ENCODE measurements at regions of chr5 and their contacts with region 1.

Region 1: GRCh38 chr5:90434116-90434714 is 24.7 kb upstream of the CETN3 start:
- DNase-seq: no peak
- H3K4me3 ChIP-seq: no peak overlapping the region
- H3K27ac ChIP-seq: no peak overlapping the region
- H3K4me1 ChIP-seq: no peaks in the 10 kb centered on the region
- H3K27me3 ChIP-seq: no peaks in the 10 kb centered on the region
- CTCF ChIP-seq: peak in 4 of 6 experiments; percentile 21 to 49 (median 36)
- POLR2A ChIP-seq: no peak

Region 2: GRCh38 chr5:90529939-90530677 is 95.9 kb after region 1 on chr5:
- intact Hi-C with region 1: loop called (anchors 10 kb)
- DNase-seq: peak; percentile 50
- H3K4me3 ChIP-seq: peak overlapping the region; percentile 73 to 94 (median 81)
- H3K27ac ChIP-seq: peak overlapping the region; percentile 92 to 97 (median 94)
- H3K4me1 ChIP-seq: peaks cover 0 to 38% (median 20%) of the 10 kb centered on the region in 3 donors
- H3K27me3 ChIP-seq: peaks cover 0 to 30% (median 0%) of the 10 kb centered on the region in 4 donors
- CTCF ChIP-seq: peak in 5 of 6 experiments; percentile 52 to 75 (median 64)
- POLR2A ChIP-seq: no peak

Region 3: GRCh38 chr5:90700299-90700698 is 266.1 kb after region 1 on chr5:
- intact Hi-C with region 1: no loop called
- DNase-seq: no peak
- H3K4me3 ChIP-seq: no peak overlapping the region
- H3K27ac ChIP-seq: no peak overlapping the region
- H3K4me1 ChIP-seq: no peaks in the 10 kb centered on the region
- H3K27me3 ChIP-seq: no peaks in the 10 kb centered on the region
- CTCF ChIP-seq: no peak
- POLR2A ChIP-seq: no peak

Region 4: DNA sequence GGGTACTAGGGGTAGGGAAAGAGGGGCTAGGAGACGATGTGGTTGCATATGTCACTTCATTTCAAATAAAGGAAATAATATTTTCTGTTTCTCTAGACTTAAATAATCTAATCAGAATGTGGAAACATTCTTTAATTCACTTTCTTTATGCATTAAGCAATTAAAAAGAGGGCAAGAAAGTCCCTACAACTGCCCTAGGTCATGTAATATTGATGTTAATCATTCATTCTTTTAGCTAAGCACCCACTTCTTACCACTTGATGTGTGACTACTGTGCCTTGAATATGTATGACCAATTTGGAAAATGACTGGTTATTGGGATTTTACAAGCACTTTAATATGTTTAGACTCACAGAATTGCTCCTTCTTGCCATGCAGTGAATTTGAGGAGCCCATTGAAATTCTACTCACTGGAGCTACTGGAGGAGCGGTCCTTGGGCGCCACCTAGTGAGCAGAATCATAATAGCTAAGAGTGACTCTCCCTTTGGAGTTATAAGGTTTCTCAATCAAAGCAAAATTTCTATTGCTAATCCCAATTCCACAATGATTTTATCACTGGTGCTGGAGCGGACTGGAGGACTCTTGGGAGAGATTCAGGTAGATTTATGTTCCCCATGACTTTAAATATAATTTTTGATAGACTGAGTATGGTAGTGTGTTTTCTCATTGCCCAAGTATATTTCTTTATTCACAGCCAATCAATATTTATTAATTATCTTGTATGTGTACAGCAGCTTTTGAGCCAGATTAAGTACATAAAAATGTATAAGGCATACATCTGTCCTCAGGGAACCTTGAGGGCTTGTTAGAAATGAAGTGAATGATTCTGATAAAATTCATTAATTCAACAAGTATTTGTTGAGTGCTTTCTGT is 349.5 kb after region 1 on chr5:
- intact Hi-C with region 1: loop called (anchors 10 kb)
- DNase-seq: no peak
- H3K4me3 ChIP-seq: no peak overlapping the region
- H3K27ac ChIP-seq: no peak overlapping the region
- H3K4me1 ChIP-seq: no peaks in the 10 kb centered on the region
- H3K27me3 ChIP-seq: no peaks in the 10 kb centered on the region
- CTCF ChIP-seq: peak; percentile 55 to 82 (median 70)
- POLR2A ChIP-seq: no peak

Measured in esophagus squamous epithelium (tissue), 5 donors.